Posterior vena cava (tissue), 2 donors: ENCODE measurements at regions of chr7 and their contacts with region 1.

Region 1: DNA sequence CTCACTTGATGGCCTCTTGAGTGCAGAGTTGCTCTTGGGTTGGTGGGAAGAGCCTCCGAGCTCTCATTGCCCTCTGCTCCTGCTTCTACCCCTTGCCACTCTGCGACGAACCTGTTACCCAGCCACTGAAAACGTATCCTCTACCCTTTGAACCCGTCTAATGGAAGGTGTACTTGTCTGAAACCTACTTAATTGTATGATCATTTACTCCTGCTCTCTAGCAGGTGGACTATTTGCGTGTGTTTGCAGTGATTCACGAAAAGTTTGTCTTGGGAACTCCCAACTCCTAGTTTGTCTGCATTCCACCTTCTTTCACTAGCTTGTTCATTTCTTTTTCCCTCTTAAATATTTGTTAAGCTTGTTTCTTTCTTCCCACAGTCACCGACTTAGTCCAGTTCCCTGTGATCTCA is 503 bp downstream of the CROT start:
- DNase-seq: no peak

Region 2: GRCh38 chr7:87380905-87381304 is 34.9 kb after region 1 on chr7:
- intact Hi-C with region 1: loop called in 1 of 2 experiments (anchors 2 kb)
- DNase-seq: no peak

Region 3: GRCh38 chr7:87398446-87398845 is 52.5 kb after region 1 on chr7:
- intact Hi-C with region 1: no loop called
- DNase-seq: no peak